Ascending aorta (tissue), 2 donors: ENCODE measurements at regions of chr11 and their contacts with region 1.

Region 1: DNA sequence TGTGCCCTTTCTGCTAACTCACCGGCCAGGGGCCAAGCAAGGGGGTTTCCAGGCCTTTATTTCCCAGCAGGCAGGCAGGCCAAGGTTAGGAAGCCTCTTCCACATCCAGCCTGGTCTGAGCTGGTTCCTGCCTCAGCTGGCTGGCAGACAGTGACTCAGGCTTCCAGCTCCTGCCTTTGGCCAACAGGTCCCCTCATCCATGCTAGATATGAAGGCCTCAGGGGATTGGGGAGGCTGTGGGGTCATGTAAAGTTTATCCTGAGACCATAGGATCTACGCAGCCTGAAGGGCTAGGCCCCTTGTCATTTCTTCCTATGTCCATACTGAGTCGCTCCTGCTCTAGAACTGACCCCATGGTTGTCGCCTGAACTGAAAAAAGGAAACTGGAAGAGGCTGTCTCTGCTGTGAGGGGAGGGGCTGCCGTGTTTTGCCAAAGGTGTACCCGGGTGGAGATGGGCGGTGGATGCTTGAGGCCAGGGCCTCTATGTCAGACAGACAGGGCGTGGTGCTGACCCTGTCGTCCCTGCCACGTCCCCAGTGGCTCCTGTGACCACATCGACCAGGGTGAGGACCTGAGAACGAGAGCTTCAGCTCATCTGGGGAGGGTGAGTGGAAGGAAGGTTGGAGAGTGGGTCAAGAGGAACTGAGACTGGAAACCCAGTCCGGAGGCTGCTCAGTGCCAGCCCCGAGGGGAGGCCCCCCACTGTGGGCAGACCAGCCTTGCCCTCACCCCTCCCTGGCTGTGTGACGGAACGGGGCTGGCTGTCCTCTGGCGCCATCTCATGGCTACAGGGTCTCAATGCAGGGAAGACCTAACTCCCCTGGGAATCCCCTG is 17.0 kb downstream of the P2RY6 start:
- DNase-seq: peak; percentile 56 to 88
- H3K4me3 ChIP-seq: peak overlapping the region in 1 of 2 donors; percentile 34
- H3K27ac ChIP-seq: peak overlapping the region; percentile 78 to 79
- H3K4me1 ChIP-seq: peaks cover 0 to 15% of the 10 kb centered on the region in 2 donors
- H3K27me3 ChIP-seq: no peaks in the 10 kb centered on the region
- CTCF ChIP-seq: peak; percentile 95 to 99 (median 97)

Region 2: DNA sequence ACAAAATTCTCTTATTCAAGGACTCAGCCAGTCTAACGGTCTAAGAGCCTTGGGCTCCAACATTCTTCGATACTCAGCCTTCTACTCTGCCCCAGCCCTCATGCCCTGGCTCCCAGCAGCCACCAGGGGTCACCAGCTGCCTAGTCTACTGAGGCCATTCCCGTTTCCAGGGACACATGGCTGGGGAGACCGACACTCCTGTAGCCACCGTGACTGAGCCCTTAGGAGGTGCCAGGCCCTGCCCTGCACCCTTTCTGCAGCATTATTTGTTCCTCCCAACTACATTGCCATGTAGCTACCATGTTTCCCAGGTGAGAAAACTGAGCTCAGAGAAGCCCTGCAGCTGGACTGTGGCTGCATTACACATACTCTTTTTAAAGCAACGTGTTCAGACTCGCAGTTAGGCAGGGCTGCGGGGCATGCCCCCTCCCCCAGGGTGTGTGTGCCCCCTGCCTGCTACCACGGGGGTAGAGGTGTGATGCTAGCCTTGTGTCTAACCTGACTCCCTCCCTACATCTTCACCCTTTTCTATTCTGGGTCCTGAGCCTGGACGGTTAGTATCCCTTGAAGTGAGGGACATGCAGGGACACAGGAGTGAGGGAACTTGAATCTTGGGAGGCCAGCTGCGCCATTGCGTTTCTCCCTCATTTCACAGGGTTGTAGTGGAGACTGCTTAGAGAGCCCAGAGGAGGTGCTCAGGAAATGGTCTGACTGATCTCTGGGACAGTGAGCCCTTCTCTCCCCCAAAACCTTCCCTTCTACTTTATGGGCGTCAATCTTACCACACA is 457.4 kb before region 1 on chr11:
- intact Hi-C with region 1: loop called (anchors 5 kb)
- DNase-seq: peak in 1 of 2 donors; percentile 94
- H3K4me3 ChIP-seq: no peak overlapping the region
- H3K27ac ChIP-seq: peak overlapping the region; percentile 97 to 99
- H3K4me1 ChIP-seq: peaks cover 23 to 50% of the 10 kb centered on the region in 2 donors
- H3K27me3 ChIP-seq: no peaks in the 10 kb centered on the region
- CTCF ChIP-seq: peak; percentile 93 to 98 (median 93)

Region 3: DNA sequence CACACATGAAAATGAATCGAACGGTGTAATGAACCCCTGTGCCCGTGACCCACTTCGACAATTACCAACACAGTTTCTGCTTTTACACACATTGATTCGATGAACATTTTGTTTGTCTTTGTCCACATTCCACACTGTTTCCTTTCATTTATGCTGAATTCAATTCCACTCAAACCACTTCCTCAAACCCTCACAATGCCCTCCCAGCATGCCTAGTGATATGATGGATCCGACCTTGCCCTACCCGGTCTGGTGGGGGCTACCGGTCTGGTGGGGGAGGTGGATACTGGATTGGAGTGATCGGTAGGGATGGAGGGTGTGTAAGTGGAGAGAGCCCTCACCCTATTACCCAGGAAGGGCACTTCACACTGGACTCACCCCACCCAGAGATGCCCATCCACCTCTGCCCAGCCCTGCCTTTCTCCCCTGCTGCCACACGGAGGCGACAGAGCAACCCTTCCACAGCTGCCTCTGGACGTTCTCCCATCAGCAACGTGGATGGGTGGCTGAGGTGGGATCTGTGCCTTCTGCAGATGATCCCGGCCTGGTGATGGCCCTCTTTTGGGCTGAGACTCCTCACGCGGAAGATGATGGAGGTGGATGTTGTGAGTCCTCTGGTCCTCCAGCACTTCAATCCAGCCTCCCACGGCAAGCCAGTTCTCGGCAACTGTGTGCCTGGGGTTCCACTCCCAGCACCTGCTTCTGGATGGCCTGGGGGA is 104.0 kb before region 1 on chr11:
- intact Hi-C with region 1: loop called (anchors 1 kb)
- DNase-seq: peak in 1 of 2 donors; percentile 83
- H3K4me3 ChIP-seq: peak overlapping the region in 1 of 2 donors; percentile 11
- H3K27ac ChIP-seq: peak overlapping the region; percentile 69 to 77
- H3K4me1 ChIP-seq: peaks cover 16 to 18% of the 10 kb centered on the region in 2 donors
- H3K27me3 ChIP-seq: no peaks in the 10 kb centered on the region
- CTCF ChIP-seq: peak; percentile 82 to 84 (median 84)

Region 4: GRCh38 chr11:73218106-73218829 is 70.8 kb before region 1 on chr11 and contains the start of gene P2RY2:
- intact Hi-C with region 1: loop called (anchors 1 kb)
- DNase-seq: peak; percentile 22 to 86
- H3K4me3 ChIP-seq: peak within 1 kb of the TSS; percentile 52 to 71
- H3K27ac ChIP-seq: peak within 1 kb of the TSS in 1 of 2 donors; percentile 11
- H3K4me1 ChIP-seq: peaks cover 2 to 3% of the 10 kb centered on the region in 2 donors
- H3K27me3 ChIP-seq: no peaks in the 10 kb centered on the region
- CTCF ChIP-seq: peak; percentile 66 to 74 (median 69)
- total RNA-seq, gene P2RY2: 18.3 TPM

Region 5: GRCh38 chr11:73242251-73243079 is 46.6 kb before region 1 on chr11:
- intact Hi-C with region 1: loop called (anchors 1 kb)
- DNase-seq: peak; percentile 47 to 87
- H3K4me3 ChIP-seq: peak overlapping the region in 1 of 2 donors; percentile 43
- H3K27ac ChIP-seq: peak overlapping the region in 1 of 2 donors; percentile 37
- H3K4me1 ChIP-seq: peaks cover 5 to 16% of the 10 kb centered on the region in 2 donors
- H3K27me3 ChIP-seq: no peaks in the 10 kb centered on the region
- CTCF ChIP-seq: peak; percentile 90 to 94 (median 91)

Region 6: DNA sequence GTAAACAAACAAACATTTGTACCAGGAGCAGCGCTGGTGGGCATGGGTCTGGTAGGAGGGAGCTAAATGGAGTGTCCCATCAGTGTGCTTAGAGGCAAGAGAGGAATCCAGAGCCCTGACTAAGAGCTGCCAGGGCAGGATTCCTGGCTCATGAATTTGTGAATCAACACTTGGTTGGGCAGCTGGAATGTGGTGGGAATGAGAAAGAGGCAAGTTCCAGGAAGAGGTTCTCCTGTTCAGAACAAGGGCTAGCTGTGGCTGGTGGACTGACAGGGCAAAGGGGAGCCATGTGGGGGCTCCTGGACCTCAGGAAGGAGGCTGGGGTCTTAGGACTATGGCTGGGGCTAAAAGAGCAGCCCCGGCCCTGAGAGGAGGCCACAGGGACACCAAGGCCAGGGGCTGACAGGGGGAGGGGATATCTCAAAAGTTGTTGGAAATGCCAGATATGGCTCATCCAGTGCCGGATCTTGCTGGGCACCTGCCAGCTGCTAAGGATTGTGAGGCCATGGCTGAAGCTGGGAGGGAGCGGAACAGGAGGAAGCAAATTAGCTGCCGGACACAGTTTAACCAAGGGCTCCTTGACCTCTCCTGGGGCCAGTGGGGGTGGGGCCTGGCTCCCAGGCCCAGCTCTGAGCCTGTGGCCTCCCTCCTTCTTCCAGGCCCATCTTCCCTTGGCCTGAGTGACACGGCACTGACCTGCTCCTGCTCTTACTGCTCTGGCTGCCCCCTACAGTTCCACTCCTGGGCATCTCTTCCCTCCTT is 31.6 kb before region 1 on chr11:
- intact Hi-C with region 1: loop called (anchors 2 kb)
- DNase-seq: peak in 1 of 2 donors; percentile 92
- H3K4me3 ChIP-seq: no peak overlapping the region
- H3K27ac ChIP-seq: peak overlapping the region; percentile 94
- H3K4me1 ChIP-seq: peaks cover 12 to 15% of the 10 kb centered on the region in 2 donors
- H3K27me3 ChIP-seq: no peaks in the 10 kb centered on the region
- CTCF ChIP-seq: no peak

Region 7: DNA sequence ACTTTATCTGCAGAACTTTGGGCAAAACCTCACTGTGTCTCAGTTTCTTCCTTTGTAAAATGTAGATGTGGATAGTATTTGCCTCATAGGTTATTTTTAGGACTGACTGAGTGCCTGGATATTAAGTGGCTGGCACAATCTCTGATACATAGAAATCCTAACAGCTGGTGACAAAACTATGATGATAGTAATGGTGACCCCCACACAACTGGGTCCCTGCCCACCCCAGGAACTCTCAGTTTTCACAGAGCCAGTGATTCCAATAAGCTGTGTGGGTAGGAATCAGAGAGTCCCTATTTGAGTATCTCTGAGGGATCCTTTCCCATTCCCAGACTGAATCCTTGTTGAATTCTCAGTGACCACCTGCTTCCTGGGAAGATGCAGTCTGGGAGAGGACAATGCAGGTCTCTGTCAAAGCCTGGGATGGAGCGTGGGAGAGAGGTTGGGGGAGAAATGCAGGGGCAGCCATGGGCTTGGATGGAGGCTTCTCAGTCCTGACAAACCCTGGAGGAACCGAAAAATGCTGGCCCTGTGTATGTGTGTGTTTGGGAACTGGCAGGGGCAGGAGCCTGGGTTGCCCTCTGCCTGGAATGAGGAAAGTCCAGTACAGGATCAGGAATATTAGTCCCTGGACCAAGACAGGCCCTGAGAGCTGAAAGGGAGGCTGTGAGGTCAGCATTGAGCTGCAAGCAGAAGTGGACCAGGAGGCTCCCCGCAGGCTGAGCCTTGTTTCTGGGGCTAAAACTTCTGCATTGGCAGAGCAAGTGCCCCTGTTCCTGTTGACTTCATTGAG is 23.0 kb before region 1 on chr11:
- intact Hi-C with region 1: loop called (anchors 2 kb)
- DNase-seq: peak in 1 of 2 donors; percentile 64
- H3K4me3 ChIP-seq: no peak overlapping the region
- H3K27ac ChIP-seq: peak overlapping the region; percentile 63 to 64
- H3K4me1 ChIP-seq: peaks cover 19 to 21% of the 10 kb centered on the region in 2 donors
- H3K27me3 ChIP-seq: no peaks in the 10 kb centered on the region
- CTCF ChIP-seq: no peak

Region 8: DNA sequence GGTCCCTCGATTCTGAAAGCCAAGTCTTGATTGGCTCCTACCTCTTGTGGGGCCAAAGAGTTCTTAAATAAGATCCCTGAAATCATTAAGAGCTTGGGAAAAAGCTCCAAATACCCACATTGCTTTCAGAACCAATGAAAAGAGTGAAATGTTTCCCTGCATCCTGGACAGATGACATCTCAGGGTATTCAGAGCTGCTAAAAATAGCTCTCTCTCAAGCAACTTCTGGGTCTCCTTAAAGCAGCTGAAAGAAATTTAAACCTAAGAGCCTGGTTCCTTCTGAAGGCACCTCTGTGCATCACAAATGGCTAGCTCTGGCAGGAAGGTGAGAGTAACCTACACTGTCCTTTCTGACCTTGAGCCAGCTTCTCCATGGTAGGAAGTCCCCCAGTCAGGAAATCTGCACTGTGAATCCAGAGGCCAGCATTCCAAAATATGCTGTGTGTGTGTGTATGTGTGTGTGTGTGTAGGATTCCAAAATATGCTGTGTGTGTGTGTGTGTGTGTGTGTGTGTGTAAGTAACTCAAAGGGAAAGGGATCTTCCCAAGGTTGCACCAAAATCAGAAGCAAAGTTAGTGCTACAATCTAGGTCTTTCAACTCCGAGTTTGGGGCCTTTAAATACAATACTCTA is 137.2 kb after region 1 on chr11:
- intact Hi-C with region 1: no loop called
- DNase-seq: no peak
- H3K4me3 ChIP-seq: no peak overlapping the region
- H3K27ac ChIP-seq: no peak overlapping the region
- H3K4me1 ChIP-seq: peaks cover 0 to 7% of the 10 kb centered on the region in 2 donors
- H3K27me3 ChIP-seq: no peaks in the 10 kb centered on the region
- CTCF ChIP-seq: no peak